Colonic mucosa (tissue), 4 donors: ENCODE measurements at regions of chr7 and their contacts with region 1.

Region 1: GRCh38 chr7:83984076-83984475 is 210.5 kb downstream of the SEMA3A start:
- DNase-seq: no peak
- H3K4me3 ChIP-seq: no peak overlapping the region
- H3K27ac ChIP-seq: no peak overlapping the region
- H3K4me1 ChIP-seq: no peaks in the 10 kb centered on the region
- H3K27me3 ChIP-seq: no peaks in the 10 kb centered on the region
- CTCF ChIP-seq: no peak

Region 2: GRCh38 chr7:84469034-84469433 is 485.0 kb after region 1 on chr7:
- intact Hi-C with region 1: loop called (anchors 10 kb)
- DNase-seq: no peak
- H3K4me3 ChIP-seq: no peak overlapping the region
- H3K27ac ChIP-seq: no peak overlapping the region
- H3K4me1 ChIP-seq: no peaks in the 10 kb centered on the region
- H3K27me3 ChIP-seq: no peaks in the 10 kb centered on the region
- CTCF ChIP-seq: no peak